ENCODE measurements at regions of chr7 and their contacts with region 1.

Region 1: GRCh38 chr7:143240291-143241168 is 18.7 kb downstream of the TAS2R40 start:
- DNase-seq: peak; percentile 44 to 81 (median 68)
- H3K4me3 ChIP-seq: no peak overlapping the region
- H3K4me3 Mint-ChIP-seq: peak overlapping the region in 2 of 7 donors; percentile 36 to 41
- H3K27ac ChIP-seq: no peak overlapping the region
- H3K27ac Mint-ChIP-seq: peak overlapping the region in 4 of 8 donors; percentile 36 to 61 (median 46)
- H3K4me1 ChIP-seq: peaks cover 21% of the 10 kb centered on the region
- H3K4me1 Mint-ChIP-seq: peaks cover 27 to 39% (median 34%) of the 10 kb centered on the region in 3 donors
- H3K27me3 ChIP-seq: no peaks in the 10 kb centered on the region
- H3K27me3 Mint-ChIP-seq: peaks cover 14 to 22% of the 10 kb centered on the region in 2 donors

Region 2: GRCh38 chr7:143181349-143181748 is 59.2 kb before region 1 on chr7:
- CTCF ChIA-PET with region 1: no interaction called
- POLR2A ChIA-PET with region 1: no interaction called
- DNase-seq: no peak
- H3K4me3 ChIP-seq: no peak overlapping the region
- H3K4me3 Mint-ChIP-seq: no peak overlapping the region
- H3K27ac ChIP-seq: no peak overlapping the region
- H3K27ac Mint-ChIP-seq: no peak overlapping the region
- H3K4me1 ChIP-seq: no peaks in the 10 kb centered on the region
- H3K4me1 Mint-ChIP-seq: no peaks in the 10 kb centered on the region
- H3K27me3 ChIP-seq: no peaks in the 10 kb centered on the region
- H3K27me3 Mint-ChIP-seq: peaks cover 11 to 43% of the 10 kb centered on the region in 2 donors

Region 3: DNA sequence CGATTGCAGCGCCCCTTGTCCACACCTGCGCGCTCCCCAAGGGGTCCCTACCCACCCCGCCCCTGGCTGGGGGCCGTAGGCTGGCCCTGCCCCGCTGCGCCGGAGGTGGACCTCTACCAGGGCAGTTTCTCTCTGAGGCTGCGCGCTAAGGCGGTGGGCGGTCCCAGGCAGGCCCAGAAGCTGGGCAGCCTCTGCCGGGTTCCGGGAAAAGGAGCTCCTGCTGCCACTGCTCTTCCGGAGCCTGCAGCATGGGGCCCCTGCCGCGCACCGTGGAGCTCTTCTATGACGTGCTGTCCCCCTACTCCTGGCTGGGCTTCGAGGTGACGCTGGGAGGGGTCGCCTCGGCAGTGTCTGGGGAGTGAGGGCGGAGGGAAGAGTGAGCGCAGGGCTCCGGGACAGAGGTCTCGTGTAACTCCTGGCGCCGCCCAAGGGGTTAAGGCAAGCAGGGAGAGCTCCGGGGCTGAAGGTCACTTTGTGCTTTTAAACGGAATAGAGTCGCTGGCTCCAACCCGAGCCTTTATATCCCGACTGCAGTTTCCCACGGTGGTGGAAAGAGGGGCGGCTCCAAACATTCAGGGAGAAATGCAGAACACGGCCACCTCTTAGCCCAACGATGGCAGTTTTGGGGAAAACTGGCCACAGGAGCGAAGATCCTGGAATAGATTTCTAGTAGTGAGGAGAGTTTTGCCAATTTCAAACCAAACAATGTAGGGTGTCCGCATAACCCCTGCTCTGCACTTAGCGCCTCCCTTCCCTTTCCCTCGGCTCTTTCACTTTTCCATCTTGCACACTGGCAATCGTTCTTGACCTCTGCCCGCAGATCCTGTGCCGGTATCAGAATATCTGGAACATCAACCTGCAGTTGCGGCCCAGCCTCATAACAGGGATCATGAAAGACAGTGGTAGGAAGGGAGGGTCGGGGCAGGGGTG is 23.0 kb after region 1 on chr7 and contains the start of gene GSTK1:
- CTCF ChIA-PET with region 1: interaction called, 69 read pairs
- POLR2A ChIA-PET with region 1: interaction called, 4 read pairs
- DNase-seq: peak; percentile 70 to 88 (median 78)
- H3K4me3 ChIP-seq: peak within 1 kb of the TSS; percentile 95
- H3K4me3 Mint-ChIP-seq: peak within 1 kb of the TSS; percentile 88 to 99 (median 97)
- H3K27ac ChIP-seq: peak within 1 kb of the TSS; percentile 83
- H3K27ac Mint-ChIP-seq: peak within 1 kb of the TSS; percentile 63 to 98 (median 94)
- H3K4me1 ChIP-seq: peaks cover 37% of the 10 kb centered on the region
- H3K4me1 Mint-ChIP-seq: peaks cover 49 to 84% (median 66%) of the 10 kb centered on the region in 3 donors
- H3K27me3 ChIP-seq: no peaks in the 10 kb centered on the region
- H3K27me3 Mint-ChIP-seq: no peaks in the 10 kb centered on the region
- total RNA-seq, gene GSTK1: 147 to 151 TPM

Region 4: GRCh38 chr7:143299840-143300239 is 59.3 kb after region 1 on chr7:
- CTCF ChIA-PET with region 1: interaction called, 103 read pairs
- POLR2A ChIA-PET with region 1: interaction called, 7 read pairs
- DNase-seq: peak; percentile 29 to 75 (median 49)
- H3K4me3 ChIP-seq: no peak overlapping the region
- H3K4me3 Mint-ChIP-seq: no peak overlapping the region
- H3K27ac ChIP-seq: no peak overlapping the region
- H3K27ac Mint-ChIP-seq: peak overlapping the region in 3 of 8 donors; percentile 7 to 54 (median 38)
- H3K4me1 ChIP-seq: peaks cover 24% of the 10 kb centered on the region
- H3K4me1 Mint-ChIP-seq: peaks cover 32 to 52% (median 42%) of the 10 kb centered on the region in 3 donors
- H3K27me3 ChIP-seq: no peaks in the 10 kb centered on the region
- H3K27me3 Mint-ChIP-seq: no peaks in the 10 kb centered on the region

Region 5: GRCh38 chr7:143345428-143345900 is 104.9 kb after region 1 on chr7:
- CTCF ChIA-PET with region 1: interaction called, 14 read pairs
- POLR2A ChIA-PET with region 1: no interaction called
- DNase-seq: peak; percentile 38 to 75 (median 51)
- H3K4me3 ChIP-seq: peak overlapping the region; percentile 23
- H3K4me3 Mint-ChIP-seq: peak overlapping the region in 6 of 7 donors; percentile 58 to 79 (median 78)
- H3K27ac ChIP-seq: no peak overlapping the region
- H3K27ac Mint-ChIP-seq: peak overlapping the region in 2 of 8 donors; percentile 42 to 92
- H3K4me1 ChIP-seq: peaks cover 8% of the 10 kb centered on the region
- H3K4me1 Mint-ChIP-seq: peaks cover 7 to 10% (median 9%) of the 10 kb centered on the region in 3 donors
- H3K27me3 ChIP-seq: no peaks in the 10 kb centered on the region
- H3K27me3 Mint-ChIP-seq: peaks cover 7 to 16% of the 10 kb centered on the region in 2 donors

Region 6: GRCh38 chr7:143380255-143380645 is 139.7 kb after region 1 on chr7:
- CTCF ChIA-PET with region 1: interaction called, 21 read pairs
- POLR2A ChIA-PET with region 1: no interaction called
- DNase-seq: peak; percentile 72 to 89 (median 79)
- H3K4me3 ChIP-seq: peak overlapping the region; percentile 85
- H3K4me3 Mint-ChIP-seq: peak overlapping the region; percentile 89 to 97 (median 93)
- H3K27ac ChIP-seq: peak overlapping the region; percentile 96
- H3K27ac Mint-ChIP-seq: peak overlapping the region; percentile 83 to 99 (median 95)
- H3K4me1 ChIP-seq: peaks cover 70% of the 10 kb centered on the region
- H3K4me1 Mint-ChIP-seq: peaks cover 44 to 45% (median 45%) of the 10 kb centered on the region in 3 donors
- H3K27me3 ChIP-seq: no peaks in the 10 kb centered on the region
- H3K27me3 Mint-ChIP-seq: peaks cover 0 to 2% of the 10 kb centered on the region in 2 donors

Measured in CD8-positive, alpha-beta memory T cell (primary cell).